Left cardiac atrium (tissue), 4 donors: ENCODE measurements at regions of chr2 and their contacts with region 1.

Region 1: GRCh38 chr2:150425121-150425955 is 62.1 kb downstream of the RND3 start:
- DNase-seq: peak; percentile 27
- ATAC-seq: peak; percentile 50 to 66

Region 2: DNA sequence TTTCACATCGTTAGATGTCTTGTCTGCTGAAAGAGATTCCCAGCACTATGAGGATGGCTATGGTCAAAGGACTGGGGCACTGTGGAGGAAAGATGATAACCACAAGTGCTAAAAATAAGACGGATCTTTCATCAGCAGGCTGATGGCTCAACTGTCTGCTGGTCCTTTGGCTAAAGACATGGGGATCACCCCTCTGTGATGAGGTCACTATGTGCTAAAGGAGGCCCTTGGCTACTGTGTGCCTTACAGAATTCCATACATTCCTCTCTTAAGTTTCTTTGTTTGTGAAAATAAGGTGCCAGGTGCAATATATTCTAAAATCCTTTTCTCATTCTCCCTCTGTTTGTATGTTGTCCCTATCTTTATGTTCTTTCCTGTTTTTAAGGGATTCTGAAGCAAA is 1134.7 kb before region 1 on chr2:
- intact Hi-C with region 1: no loop called
- DNase-seq: no peak
- ATAC-seq: no peak

Region 3: DNA sequence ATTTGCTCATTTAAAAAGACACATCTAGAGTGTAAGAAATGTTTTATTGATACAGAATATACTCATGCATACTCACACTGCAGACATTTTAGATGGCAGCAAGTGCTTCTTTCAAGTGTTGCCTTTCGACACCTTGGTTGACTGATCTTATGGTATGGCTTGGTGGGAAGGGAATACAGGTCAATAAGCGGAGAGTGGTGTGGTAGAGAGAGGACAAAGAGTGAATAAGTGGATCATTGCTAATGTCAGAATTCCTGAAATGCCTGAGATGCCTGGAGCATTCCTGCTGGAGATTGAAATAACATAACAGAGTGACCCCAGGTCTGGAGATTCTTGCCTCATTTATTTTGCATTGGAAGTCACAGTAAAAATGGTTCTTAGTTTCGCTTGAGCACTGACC is 14.5 kb before region 1 on chr2:
- intact Hi-C with region 1: no loop called
- DNase-seq: no peak
- ATAC-seq: no peak

Region 4: GRCh38 chr2:150610671-150611279 is 185.4 kb after region 1 on chr2:
- intact Hi-C with region 1: loop called in 1 of 2 experiments (anchors 10 kb)
- DNase-seq: no peak
- ATAC-seq: no peak